ENCODE measurements at regions of chr5 and their contacts with region 1.

Region 1: GRCh38 chr5:144142139-144142823 is 28.2 kb downstream of the YIPF5 start:
- DNase-seq: peak in 1 of 2 experiments; percentile 11
- H3K4me3 ChIP-seq: no peak overlapping the region
- H3K4me3 Mint-ChIP-seq: no peak overlapping the region
- H3K27ac Mint-ChIP-seq: no peak overlapping the region
- H3K4me1 ChIP-seq: no peaks in the 10 kb centered on the region
- H3K4me1 Mint-ChIP-seq: no peaks in the 10 kb centered on the region
- H3K27me3 ChIP-seq: no peaks in the 10 kb centered on the region
- H3K27me3 Mint-ChIP-seq: peaks cover 7% of the 10 kb centered on the region
- CTCF ChIP-seq: peak; percentile 50 to 67

Region 2: DNA sequence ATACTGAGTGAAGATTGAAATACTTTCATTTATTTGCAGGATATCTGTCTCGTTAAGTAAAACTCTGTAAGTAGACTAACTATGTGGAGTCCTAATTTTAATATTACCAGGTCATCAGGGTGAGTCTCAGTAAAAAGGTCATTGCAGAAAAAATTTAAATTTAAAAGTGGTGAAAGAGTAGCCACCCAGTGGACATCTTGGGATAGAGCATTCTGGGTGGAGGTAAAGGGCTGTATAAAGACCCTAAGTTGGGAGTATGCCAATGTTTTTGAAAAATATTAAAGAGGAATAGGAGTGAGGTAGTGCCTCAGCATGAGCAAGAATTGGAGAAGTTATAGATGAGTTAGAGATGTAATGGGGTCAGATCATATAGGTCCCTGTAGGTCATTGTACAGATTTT is 184.8 kb before region 1 on chr5:
- CTCF ChIA-PET with region 1: no interaction called
- POLR2A ChIA-PET with region 1: no interaction called
- intact Hi-C with region 1: loop called (anchors 10 kb)
- DNase-seq: no peak
- H3K4me3 ChIP-seq: no peak overlapping the region
- H3K4me3 Mint-ChIP-seq: no peak overlapping the region
- H3K27ac Mint-ChIP-seq: no peak overlapping the region
- H3K4me1 ChIP-seq: no peaks in the 10 kb centered on the region
- H3K4me1 Mint-ChIP-seq: no peaks in the 10 kb centered on the region
- H3K27me3 ChIP-seq: no peaks in the 10 kb centered on the region
- H3K27me3 Mint-ChIP-seq: peaks cover 12% of the 10 kb centered on the region
- CTCF ChIP-seq: peak; percentile 25 to 31

Region 3: GRCh38 chr5:144060598-144060997 is 81.7 kb before region 1 on chr5:
- CTCF ChIA-PET with region 1: no interaction called
- POLR2A ChIA-PET with region 1: no interaction called
- intact Hi-C with region 1: no loop called
- DNase-seq: no peak
- H3K4me3 ChIP-seq: no peak overlapping the region
- H3K4me3 Mint-ChIP-seq: no peak overlapping the region
- H3K27ac Mint-ChIP-seq: no peak overlapping the region
- H3K4me1 ChIP-seq: no peaks in the 10 kb centered on the region
- H3K4me1 Mint-ChIP-seq: no peaks in the 10 kb centered on the region
- H3K27me3 ChIP-seq: no peaks in the 10 kb centered on the region
- H3K27me3 Mint-ChIP-seq: no peaks in the 10 kb centered on the region
- CTCF ChIP-seq: no peak

Region 4: DNA sequence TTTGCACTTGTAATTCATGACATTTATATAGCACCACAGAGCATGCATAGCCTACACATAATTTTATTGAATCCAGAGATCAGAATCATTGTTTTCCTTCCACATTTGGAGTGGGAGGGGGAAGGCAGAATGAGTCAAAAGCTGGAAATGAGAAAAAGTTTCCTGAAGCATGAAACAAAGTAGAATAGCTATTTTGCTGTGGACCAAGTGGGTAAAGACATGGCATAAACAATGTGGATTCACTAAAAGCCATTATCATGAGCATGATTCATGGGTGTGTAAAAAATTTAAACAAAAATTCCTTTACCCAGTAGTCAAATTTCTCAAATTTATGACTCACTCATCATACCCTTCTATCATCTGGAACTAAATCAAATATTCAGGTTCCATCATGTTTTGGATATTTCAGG is 69.8 kb before region 1 on chr5:
- CTCF ChIA-PET with region 1: no interaction called
- POLR2A ChIA-PET with region 1: no interaction called
- intact Hi-C with region 1: no loop called
- DNase-seq: no peak
- H3K4me3 ChIP-seq: no peak overlapping the region
- H3K4me3 Mint-ChIP-seq: no peak overlapping the region
- H3K27ac Mint-ChIP-seq: no peak overlapping the region
- H3K4me1 ChIP-seq: no peaks in the 10 kb centered on the region
- H3K4me1 Mint-ChIP-seq: no peaks in the 10 kb centered on the region
- H3K27me3 ChIP-seq: no peaks in the 10 kb centered on the region
- H3K27me3 Mint-ChIP-seq: peaks cover 3% of the 10 kb centered on the region
- CTCF ChIP-seq: no peak

Region 5: GRCh38 chr5:144436007-144436406 is 293.7 kb after region 1 on chr5:
- CTCF ChIA-PET with region 1: no interaction called
- POLR2A ChIA-PET with region 1: no interaction called
- intact Hi-C with region 1: no loop called
- DNase-seq: no peak
- H3K4me3 ChIP-seq: no peak overlapping the region
- H3K4me3 Mint-ChIP-seq: no peak overlapping the region
- H3K27ac Mint-ChIP-seq: no peak overlapping the region
- H3K4me1 ChIP-seq: no peaks in the 10 kb centered on the region
- H3K4me1 Mint-ChIP-seq: no peaks in the 10 kb centered on the region
- H3K27me3 ChIP-seq: no peaks in the 10 kb centered on the region
- H3K27me3 Mint-ChIP-seq: no peaks in the 10 kb centered on the region
- CTCF ChIP-seq: no peak